ENCODE measurements at regions of chr9 and their contacts with region 1.

Region 1: GRCh38 chr9:121725008-121725775 is 73.8 kb downstream of the DAB2IP start:
- DNase-seq: peak; percentile 91

Region 2: DNA sequence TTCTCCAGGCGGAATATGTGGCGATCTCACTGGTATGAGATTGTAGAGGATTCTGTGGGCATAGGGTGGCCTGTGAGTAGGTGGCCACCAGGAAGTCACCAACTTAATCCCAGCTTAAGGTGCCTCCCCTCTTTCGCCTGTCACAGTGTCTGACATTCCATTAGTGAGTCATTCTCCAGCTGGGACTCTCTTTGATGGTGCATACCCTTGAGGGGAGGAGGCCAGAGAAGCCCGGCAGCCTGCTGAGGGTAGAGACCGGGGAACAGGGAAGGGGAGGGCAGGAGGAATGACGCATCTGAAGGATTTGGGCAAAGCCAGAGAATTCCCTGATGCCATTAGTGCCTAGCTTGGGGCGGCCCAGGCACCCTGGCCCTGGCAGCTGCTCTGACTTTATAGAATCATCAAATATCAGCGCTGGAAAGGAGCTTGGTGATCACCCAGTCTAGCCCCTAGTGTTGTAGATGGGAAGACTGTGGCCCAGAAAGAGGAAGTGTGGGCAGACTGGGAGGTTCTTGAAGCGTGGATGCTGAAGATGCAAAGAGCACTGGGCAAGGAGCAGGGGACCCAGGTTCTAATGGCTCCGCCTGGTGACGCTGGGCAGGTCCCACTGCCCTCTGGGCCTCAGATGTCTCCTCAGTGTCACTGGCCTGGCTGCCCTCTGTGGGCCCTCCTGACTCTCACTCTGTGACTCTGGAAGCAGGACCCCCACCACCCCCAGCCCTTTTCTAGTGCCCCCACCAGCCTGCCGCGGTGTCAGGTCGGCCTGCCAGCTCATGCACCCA is 32.4 kb before region 1 on chr9:
- in situ Hi-C with region 1: loop called (anchors 5 kb)
- DNase-seq: no peak

Measured in G401 (cell line).